ENCODE measurements at regions of chr13 and their contacts with region 1.

Region 1: DNA sequence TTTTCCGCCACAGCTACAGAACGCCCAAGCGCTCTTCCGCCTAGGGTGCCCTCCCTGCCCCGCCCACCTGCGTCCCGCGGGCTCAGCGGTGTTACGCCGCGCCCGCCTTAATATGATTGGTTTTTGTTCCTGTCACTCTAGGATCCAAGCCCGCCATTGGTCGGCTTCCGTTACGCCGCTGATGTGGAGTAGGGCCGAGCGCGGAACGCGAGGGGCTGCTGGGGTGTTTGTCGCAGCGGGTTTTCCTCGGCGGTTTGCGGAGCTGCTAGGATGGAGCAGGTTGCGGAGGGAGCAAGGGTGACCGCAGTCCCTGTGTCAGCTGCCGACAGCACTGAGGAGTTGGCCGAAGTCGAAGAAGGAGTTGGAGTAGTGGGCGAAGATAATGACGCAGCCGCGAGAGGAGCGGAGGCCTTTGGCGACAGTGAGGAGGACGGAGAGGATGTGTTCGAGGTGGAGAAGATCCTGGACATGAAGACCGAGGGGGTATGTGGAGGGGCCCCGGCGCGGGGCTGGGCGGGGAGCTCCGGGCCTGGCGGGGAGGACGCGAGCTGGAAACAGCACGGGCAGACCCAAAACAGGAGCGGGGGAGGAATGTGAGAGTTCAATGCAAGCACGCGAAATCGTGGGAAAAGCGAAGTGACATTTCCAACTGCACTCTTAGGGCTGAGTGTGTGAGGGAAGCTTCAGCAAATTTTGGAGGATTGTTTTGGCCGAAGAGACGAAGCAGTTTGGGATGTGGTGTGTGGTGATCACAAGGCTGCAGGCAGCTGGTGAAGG is at the start of gene MPHOSPH8:
- DNase-seq: peak; percentile 97
- H3K4me3 ChIP-seq: peak within 1 kb of the TSS; percentile 73 to 95 (median 82)
- H3K27ac ChIP-seq: peak within 1 kb of the TSS; percentile 90 to 95 (median 93)
- H3K4me1 ChIP-seq: peaks cover 0 to 40% (median 21%) of the 10 kb centered on the region in 4 donors
- H3K27me3 ChIP-seq: no peaks in the 10 kb centered on the region
- CTCF ChIP-seq: no peak
- EP300 ChIP-seq: no peak
- POLR2A ChIP-seq: peak; percentile 82 to 85
- total RNA-seq, gene MPHOSPH8: 37.4 to 47.6 (median 41.1) TPM

Region 2: DNA sequence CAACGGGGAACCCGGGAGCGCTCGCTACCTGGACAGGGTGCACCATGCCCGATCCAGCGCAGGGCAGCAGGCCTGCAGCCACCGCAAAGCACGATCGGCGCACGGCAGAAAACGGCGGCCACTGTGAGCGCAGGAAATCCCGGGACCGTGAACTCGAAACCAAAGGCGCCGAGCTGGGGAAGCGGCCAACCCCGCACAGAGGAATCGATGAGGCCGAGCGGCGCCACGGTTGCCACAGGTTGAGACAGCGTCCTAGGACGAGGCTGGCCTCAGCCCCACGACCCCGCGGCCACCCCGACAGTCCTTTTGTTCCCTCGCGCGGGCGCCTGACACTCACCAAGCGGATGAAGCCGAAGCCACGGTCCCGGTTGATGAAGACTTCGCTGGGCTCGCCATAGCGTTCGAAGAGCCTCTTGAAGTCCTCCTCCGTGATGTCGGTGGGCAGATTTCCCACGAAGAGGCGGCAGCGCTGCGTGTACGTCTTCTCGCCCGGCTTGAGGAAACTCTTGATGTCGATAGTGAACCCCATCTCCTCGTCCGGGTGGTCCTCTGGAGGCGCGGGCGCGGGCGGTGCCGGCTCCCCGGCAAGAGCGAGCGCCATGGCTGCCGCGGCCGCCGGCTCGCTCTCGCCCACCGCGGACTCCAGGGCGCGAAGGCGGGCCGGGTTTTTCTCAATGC is 148.5 kb after region 1 on chr13:
- intact Hi-C with region 1: loop called (anchors 10 kb)
- DNase-seq: peak; percentile 81
- H3K4me3 ChIP-seq: peak overlapping the region; percentile 76 to 95 (median 85)
- H3K27ac ChIP-seq: peak overlapping the region; percentile 93 to 98 (median 94)
- H3K4me1 ChIP-seq: peaks cover 0 to 17% (median 4%) of the 10 kb centered on the region in 4 donors
- H3K27me3 ChIP-seq: no peaks in the 10 kb centered on the region
- CTCF ChIP-seq: no peak
- EP300 ChIP-seq: no peak
- POLR2A ChIP-seq: no peak

Region 3: GRCh38 chr13:19852766-19853165 is 219.1 kb after region 1 on chr13:
- intact Hi-C with region 1: no loop called
- DNase-seq: no peak
- H3K4me3 ChIP-seq: no peak overlapping the region
- H3K27ac ChIP-seq: no peak overlapping the region
- H3K4me1 ChIP-seq: peaks cover 0 to 15% (median 2%) of the 10 kb centered on the region in 4 donors
- H3K27me3 ChIP-seq: no peaks in the 10 kb centered on the region
- CTCF ChIP-seq: no peak
- EP300 ChIP-seq: no peak
- POLR2A ChIP-seq: no peak

Region 4: DNA sequence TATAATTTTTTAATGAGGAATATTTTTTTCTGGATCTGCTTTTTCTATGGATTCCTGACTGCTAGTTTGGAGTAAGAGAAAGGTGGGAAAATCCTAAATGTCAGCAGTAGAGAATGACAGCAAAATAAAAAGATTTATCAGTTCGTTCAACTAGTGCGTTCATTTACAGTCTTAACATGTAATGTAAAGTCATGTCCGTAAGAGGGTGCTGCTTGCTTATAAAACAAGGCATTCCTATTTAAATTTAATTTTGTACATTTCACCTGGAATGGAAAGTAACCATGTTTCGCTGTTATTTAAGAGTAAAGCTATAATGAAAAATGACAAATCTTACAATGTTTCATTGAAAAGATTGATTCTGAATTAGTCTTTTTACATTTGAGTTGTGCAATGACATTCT is 401.5 kb after region 1 on chr13:
- intact Hi-C with region 1: no loop called
- DNase-seq: no peak
- H3K4me3 ChIP-seq: no peak overlapping the region
- H3K27ac ChIP-seq: no peak overlapping the region
- H3K4me1 ChIP-seq: no peaks in the 10 kb centered on the region
- H3K27me3 ChIP-seq: no peaks in the 10 kb centered on the region
- CTCF ChIP-seq: no peak
- EP300 ChIP-seq: no peak
- POLR2A ChIP-seq: no peak